Gastrocnemius medialis (tissue), 4 donors: ENCODE measurements at regions of chr12 and their contacts with region 1.

Region 1: DNA sequence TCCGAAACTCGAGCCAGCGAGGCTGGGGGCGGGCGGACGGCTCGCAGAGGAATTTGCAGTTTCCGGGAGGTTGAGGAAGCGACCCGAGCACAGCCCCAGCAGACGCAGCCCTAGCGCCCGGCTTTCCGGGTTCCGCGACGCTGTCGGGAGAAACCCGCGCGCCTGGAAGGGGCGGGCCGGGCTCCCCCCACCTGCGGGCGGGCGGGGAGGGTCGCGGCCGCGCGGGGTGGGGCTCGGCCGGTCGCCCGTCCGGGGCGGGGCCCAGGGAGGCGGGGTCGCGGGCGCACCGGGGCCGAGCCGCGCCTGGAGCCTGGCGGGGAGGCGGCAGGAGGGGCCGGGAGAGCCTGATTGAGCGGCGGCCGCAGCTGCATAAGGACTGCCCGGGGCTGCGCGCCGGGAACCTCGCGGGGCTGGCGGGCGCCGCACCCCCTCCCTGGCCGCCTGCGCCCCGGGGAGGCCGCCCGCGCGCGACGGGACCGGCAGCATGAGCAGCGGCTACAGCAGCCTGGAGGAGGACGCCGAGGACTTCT is at the start of gene RASSF3:
- DNase-seq: peak; percentile 14 to 26
- ATAC-seq: peak; percentile 59 to 60
- H3K4me3 ChIP-seq: peak within 1 kb of the TSS; percentile 71 to 94 (median 84)
- H3K27ac ChIP-seq: peak within 1 kb of the TSS; percentile 66 to 83 (median 80)
- H3K4me1 ChIP-seq: peaks cover 4 to 14% of the 10 kb centered on the region in 2 donors
- H3K27me3 ChIP-seq: no peaks in the 10 kb centered on the region
- CTCF ChIP-seq: no peak
- POLR2A ChIP-seq: peak; percentile 46 to 70
- total RNA-seq, gene RASSF3: 5.2 to 11.5 (median 7.0) TPM

Region 2: DNA sequence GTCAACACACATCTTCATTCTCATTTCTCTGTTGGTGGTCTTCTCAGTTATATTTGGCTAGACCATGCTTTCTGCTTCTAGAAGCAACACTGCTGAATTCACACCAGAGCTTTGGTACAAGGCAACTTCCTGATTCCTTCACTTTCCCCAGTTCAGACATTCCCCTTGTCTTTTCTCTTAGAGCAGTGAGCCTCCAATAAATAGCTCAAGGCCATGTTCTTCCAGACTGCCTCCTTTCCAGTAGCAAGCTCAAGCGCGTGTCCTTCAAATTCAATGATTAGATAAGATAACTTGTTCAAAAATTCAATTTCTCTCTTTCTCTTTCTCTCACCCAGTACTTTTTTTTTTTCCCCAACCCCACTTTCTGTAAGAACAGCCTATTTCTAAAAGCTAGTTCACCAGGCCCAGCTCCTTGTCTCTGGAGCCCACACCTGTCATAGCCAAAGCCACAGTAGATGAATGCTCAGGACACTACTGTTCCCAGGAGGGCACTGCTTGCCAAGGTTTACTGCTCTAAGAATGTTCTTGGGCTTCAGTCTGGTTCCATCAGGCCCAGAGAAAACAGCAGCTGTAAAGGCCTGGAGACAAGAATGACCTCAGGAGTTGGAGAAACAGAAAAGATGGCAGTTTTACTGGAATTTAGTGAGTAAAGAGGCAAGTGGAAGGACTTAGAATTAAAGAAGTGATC is 140.6 kb before region 1 on chr12:
- in situ Hi-C with region 1: no loop called
- intact Hi-C with region 1: no loop called
- DNase-seq: peak; percentile 42 to 70
- ATAC-seq: peak; percentile 87 to 96
- H3K4me3 ChIP-seq: no peak overlapping the region
- H3K27ac ChIP-seq: peak overlapping the region; percentile 75 to 82 (median 78)
- H3K4me1 ChIP-seq: peaks cover 27 to 30% of the 10 kb centered on the region in 2 donors
- H3K27me3 ChIP-seq: no peaks in the 10 kb centered on the region
- CTCF ChIP-seq: no peak
- POLR2A ChIP-seq: no peak

Region 3: DNA sequence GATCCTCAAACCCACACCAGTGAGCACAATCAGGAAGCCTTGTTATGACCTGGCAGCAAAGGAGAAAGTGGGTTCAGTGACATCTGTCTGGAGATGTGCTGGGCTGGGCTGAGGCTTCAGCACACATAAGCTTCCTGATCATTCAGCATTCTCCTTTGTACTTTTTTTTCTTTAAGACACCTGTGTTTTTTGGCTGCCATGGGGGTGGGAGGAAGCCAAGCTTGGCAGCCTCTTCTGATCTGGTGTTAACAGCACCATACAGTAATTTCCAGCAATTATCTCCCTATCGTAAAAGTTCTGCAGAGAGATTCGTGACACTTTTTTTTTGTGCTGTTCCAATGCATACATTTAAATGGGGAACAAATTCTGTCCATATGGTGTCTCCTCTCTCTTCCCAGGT is 38.8 kb before region 1 on chr12:
- in situ Hi-C with region 1: no loop called
- intact Hi-C with region 1: loop called (anchors 5 kb)
- DNase-seq: no peak
- ATAC-seq: no peak
- H3K4me3 ChIP-seq: no peak overlapping the region
- H3K27ac ChIP-seq: no peak overlapping the region
- H3K4me1 ChIP-seq: peaks cover 4 to 9% of the 10 kb centered on the region in 2 donors
- H3K27me3 ChIP-seq: no peaks in the 10 kb centered on the region
- CTCF ChIP-seq: no peak
- POLR2A ChIP-seq: no peak

Region 4: GRCh38 chr12:64679487-64679983 is 69.3 kb after region 1 on chr12:
- in situ Hi-C with region 1: no loop called
- intact Hi-C with region 1: loop called (anchors 5 kb)
- DNase-seq: peak; percentile 25 to 36
- ATAC-seq: peak; percentile 73 to 78
- H3K4me3 ChIP-seq: peak overlapping the region in 3 of 4 donors; percentile 2 to 28 (median 18)
- H3K27ac ChIP-seq: peak overlapping the region; percentile 4 to 15 (median 8)
- H3K4me1 ChIP-seq: peaks cover 6 to 23% of the 10 kb centered on the region in 2 donors
- H3K27me3 ChIP-seq: no peaks in the 10 kb centered on the region
- CTCF ChIP-seq: no peak
- POLR2A ChIP-seq: no peak

Region 5: GRCh38 chr12:64836862-64837261 is 226.6 kb after region 1 on chr12:
- in situ Hi-C with region 1: no loop called
- intact Hi-C with region 1: no loop called
- DNase-seq: no peak
- ATAC-seq: no peak
- H3K4me3 ChIP-seq: no peak overlapping the region
- H3K27ac ChIP-seq: no peak overlapping the region
- H3K4me1 ChIP-seq: no peaks in the 10 kb centered on the region
- H3K27me3 ChIP-seq: no peaks in the 10 kb centered on the region
- CTCF ChIP-seq: no peak
- POLR2A ChIP-seq: no peak

Region 6: GRCh38 chr12:66301944-66302826 is 1692.0 kb after region 1 on chr12 and contains the start of gene HELB:
- in situ Hi-C with region 1: no loop called
- intact Hi-C with region 1: loop called (anchors 5 kb)
- DNase-seq: peak; percentile 93 to 95
- ATAC-seq: peak; percentile 97 to 99
- H3K4me3 ChIP-seq: peak within 1 kb of the TSS; percentile 62 to 88 (median 77)
- H3K27ac ChIP-seq: peak within 1 kb of the TSS; percentile 69 to 80 (median 74)
- H3K4me1 ChIP-seq: peaks cover 9 to 15% of the 10 kb centered on the region in 2 donors
- H3K27me3 ChIP-seq: no peaks in the 10 kb centered on the region
- CTCF ChIP-seq: no peak
- POLR2A ChIP-seq: peak in 1 of 2 donors; percentile 47
- total RNA-seq, gene HELB: 0.49 to 1.2 (median 0.82) TPM